ENCODE measurements at regions of chr16 and their contacts with region 1.

Region 1: DNA sequence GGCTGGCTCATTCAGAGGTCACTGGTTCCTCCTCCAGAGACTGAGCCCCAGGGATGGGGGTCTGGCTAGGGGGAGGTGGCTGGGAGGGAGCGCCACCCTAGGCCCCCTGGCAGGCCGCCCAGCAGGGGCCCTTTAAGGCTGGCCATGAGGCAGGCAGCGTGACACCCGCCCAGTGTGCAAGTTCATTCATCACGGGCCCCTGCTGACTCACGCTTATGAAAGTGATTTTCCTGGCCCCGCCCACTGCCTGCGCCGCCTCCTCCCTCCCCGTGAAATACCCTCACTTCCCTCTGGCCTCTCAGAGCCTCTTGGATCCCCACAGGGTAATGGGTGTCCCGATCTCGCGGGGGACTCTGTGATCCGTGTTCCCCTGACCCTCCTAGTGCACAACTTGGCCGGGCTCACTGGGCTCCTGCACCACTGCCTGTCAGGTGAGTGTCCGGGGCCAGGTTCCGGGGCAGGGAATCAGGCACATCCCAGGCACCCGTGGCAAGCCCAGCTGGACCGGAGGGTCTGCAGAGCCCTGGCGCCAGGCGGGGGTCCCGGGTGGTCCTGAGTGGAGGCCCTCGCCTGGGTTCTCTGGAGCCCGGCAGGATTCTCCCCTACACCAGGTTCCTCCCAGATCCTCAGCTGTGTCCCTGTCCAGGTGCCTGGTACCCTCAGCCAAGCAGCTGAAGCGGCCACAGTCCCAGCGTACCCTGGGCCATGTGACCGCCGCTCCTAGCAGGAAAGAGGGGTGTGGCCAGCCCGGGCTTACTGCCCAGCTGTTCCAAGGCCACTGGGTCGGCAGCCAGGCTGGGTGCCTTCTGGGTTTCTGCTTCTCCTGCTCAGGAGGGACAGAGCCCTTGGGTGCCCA is at the start of gene OSGIN1:
- DNase-seq: peak; percentile 91
- H3K4me3 Mint-ChIP-seq: peak within 1 kb of the TSS; percentile 57
- H3K27ac Mint-ChIP-seq: no peak within 1 kb of the TSS
- H3K4me1 Mint-ChIP-seq: peaks cover 9% of the 10 kb centered on the region
- H3K27me3 Mint-ChIP-seq: peaks cover 21% of the 10 kb centered on the region
- total RNA-seq, gene OSGIN1: 0.34 to 0.40 TPM

Region 2: DNA sequence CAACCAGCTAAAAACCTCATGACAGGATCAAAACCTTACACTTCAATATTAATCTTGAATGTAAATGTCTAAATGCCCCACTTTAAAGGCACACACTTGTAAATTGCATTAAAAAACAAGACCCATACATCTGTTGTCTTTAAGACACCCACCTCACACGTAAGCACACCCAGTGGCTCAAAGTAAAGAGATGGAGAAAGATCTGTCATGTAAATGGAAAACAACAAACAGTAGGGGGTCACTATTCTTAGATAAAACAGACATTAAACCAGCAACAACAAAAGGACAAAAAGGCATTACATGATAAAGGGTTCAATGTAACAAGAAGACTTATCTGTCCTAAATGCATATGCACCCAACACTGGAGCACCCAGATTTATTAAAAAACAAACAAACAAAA is 1977.5 kb before region 1 on chr16:
- CTCF ChIA-PET with region 1: no interaction called
- POLR2A ChIA-PET with region 1: no interaction called
- intact Hi-C with region 1: no loop called
- DNase-seq: no peak
- H3K4me3 Mint-ChIP-seq: no peak overlapping the region
- H3K27ac Mint-ChIP-seq: no peak overlapping the region
- H3K4me1 Mint-ChIP-seq: no peaks in the 10 kb centered on the region
- H3K27me3 Mint-ChIP-seq: peaks cover 3% of the 10 kb centered on the region

Region 3: DNA sequence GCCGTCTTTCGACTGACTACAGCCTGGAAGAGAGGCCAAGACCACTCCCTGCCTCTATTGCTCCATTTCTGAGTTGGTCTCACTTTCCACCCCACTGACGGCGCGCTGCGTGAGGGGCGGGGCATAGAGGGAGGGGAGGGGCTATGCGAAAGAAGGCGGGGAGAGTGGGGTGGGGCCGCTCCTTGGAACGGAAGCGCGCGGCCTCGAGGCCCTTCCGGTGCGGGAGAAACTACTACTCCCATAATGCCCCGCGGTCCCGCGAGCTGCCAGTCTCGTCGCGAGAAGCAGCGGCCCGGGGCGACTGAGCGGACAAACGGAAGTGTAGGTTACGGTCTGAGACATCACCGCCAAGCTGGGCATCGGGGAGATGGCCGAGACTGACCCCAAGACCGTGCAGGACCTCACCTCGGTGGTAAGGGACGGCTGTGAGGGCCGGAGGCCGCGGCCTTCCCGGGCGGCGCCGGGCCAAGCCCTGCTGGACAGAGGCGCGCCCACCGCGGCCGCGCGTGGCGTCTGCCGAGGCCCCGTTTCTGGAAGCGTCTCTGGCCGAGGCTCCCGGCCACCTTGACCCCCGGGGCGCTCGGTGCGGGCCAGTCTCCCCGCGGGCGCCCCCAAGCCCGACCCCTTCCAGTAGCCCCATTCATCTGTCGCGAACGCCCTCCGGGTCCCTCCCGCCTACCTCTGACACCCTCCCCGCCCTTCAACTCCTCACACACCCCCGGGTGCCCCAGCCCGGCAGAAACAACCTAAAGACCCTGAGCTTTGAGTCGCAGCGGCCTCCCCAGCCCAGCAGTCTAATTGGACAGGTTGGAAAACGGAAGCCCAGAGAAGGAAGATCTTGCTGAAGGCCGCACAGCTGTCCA is 145.2 kb before region 1 on chr16 and contains the start of gene HSBP1:
- CTCF ChIA-PET with region 1: no interaction called
- POLR2A ChIA-PET with region 1: no interaction called
- intact Hi-C with region 1: loop called (anchors 1 kb)
- DNase-seq: peak; percentile 96
- H3K4me3 Mint-ChIP-seq: peak within 1 kb of the TSS; percentile 98
- H3K27ac Mint-ChIP-seq: peak within 1 kb of the TSS; percentile 88
- H3K4me1 Mint-ChIP-seq: peaks cover 33% of the 10 kb centered on the region
- H3K27me3 Mint-ChIP-seq: no peaks in the 10 kb centered on the region
- total RNA-seq, gene HSBP1: 70.1 to 74.7 TPM

Region 4: GRCh38 chr16:83826146-83826913 is 126.8 kb before region 1 on chr16:
- CTCF ChIA-PET with region 1: interaction called, 6 read pairs
- POLR2A ChIA-PET with region 1: no interaction called
- intact Hi-C with region 1: loop called (anchors 1 kb)
- DNase-seq: peak; percentile 87
- H3K4me3 Mint-ChIP-seq: no peak overlapping the region
- H3K27ac Mint-ChIP-seq: no peak overlapping the region
- H3K4me1 Mint-ChIP-seq: peaks cover 2% of the 10 kb centered on the region
- H3K27me3 Mint-ChIP-seq: peaks cover 6% of the 10 kb centered on the region

Region 5: GRCh38 chr16:83898463-83899271 is 54.5 kb before region 1 on chr16 and contains the start of gene MLYCD:
- CTCF ChIA-PET with region 1: interaction called, 3 read pairs
- POLR2A ChIA-PET with region 1: no interaction called
- intact Hi-C with region 1: loop called (anchors 2 kb)
- DNase-seq: peak; percentile 79
- H3K4me3 Mint-ChIP-seq: peak within 1 kb of the TSS; percentile 94
- H3K27ac Mint-ChIP-seq: peak within 1 kb of the TSS; percentile 70
- H3K4me1 Mint-ChIP-seq: peaks cover 27% of the 10 kb centered on the region
- H3K27me3 Mint-ChIP-seq: no peaks in the 10 kb centered on the region
- total RNA-seq, gene MLYCD: 3.0 to 3.5 TPM

Region 6: DNA sequence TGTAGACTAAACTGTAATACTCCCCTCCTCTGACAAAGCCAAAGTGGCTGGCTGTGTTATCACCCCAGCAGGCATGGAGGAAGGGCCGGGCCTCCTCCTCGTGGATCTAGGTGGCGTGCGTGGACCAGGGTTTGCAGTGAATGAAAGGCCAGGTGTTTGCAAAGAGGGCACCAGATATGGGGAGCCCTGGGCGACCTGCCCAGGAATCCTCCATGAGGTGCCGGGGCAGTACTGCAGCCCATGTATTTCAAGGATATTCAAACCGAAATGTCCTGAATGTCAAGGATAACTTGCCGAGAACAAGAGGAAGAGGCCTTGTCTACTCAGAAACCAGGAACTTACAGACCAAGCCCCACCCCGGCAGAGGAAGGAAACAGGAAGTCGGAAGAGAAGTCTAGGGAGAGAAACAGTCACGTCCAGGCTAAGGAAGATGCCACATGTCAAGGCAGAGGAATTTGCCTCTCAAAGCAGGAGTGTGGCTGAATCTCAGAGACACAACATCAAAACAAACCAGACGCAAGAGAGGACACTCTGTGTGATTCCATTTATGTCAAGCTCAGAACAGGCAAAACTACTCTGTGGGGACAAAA is 13.8 kb before region 1 on chr16:
- CTCF ChIA-PET with region 1: no interaction called
- POLR2A ChIA-PET with region 1: no interaction called
- intact Hi-C with region 1: no loop called
- DNase-seq: no peak
- H3K4me3 Mint-ChIP-seq: no peak overlapping the region
- H3K27ac Mint-ChIP-seq: no peak overlapping the region
- H3K4me1 Mint-ChIP-seq: no peaks in the 10 kb centered on the region
- H3K27me3 Mint-ChIP-seq: no peaks in the 10 kb centered on the region

Region 7: DNA sequence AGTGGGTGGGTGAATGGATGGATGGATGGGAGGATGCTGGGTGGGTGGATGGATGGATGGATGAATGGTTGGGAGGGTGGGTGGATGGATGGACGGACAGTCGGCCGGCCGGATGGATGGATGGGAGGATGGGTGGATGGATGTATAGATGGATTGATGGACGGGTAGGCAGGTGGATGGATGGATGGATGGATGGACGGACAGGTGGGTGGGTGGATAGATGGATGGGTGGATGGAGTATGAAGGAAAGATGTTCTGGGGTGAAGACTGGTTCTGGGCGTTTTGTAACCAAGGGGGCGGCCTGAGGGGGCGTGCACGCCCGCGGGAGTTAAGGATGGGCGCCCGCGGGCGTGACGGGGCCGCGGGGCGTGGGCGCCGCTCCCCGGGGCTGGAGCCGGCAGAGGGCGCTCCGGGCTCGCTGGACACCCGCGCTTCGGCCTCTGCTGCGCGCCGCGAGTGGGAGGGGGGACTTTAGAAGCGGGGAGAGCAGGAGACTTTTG is 14.7 kb after region 1 on chr16 and contains the start of gene NECAB2:
- CTCF ChIA-PET with region 1: no interaction called
- POLR2A ChIA-PET with region 1: no interaction called
- intact Hi-C with region 1: no loop called
- DNase-seq: peak; percentile 33
- H3K4me3 Mint-ChIP-seq: no peak within 1 kb of the TSS
- H3K27ac Mint-ChIP-seq: no peak within 1 kb of the TSS
- H3K4me1 Mint-ChIP-seq: peaks cover 2% of the 10 kb centered on the region
- H3K27me3 Mint-ChIP-seq: peaks cover 11% of the 10 kb centered on the region
- total RNA-seq, gene NECAB2: not detected

Region 8: DNA sequence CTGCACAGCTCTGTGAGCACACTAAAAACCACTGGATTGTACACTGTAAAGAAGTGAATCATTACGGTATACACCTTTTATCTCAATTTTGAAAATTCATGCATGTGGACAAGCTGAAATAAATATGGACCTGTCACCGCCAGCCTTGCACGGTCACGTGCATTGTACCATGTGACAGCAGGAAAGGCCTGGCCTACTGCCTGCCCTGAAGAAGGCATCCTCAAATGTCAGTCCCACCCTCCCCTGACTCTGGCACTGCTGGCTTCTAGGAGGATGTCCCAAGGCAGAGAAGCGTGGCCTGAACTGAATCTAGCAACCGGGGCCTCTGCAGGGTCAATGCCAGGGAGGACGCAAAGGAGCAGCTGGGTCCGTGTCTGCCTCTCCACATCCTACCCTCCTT is 54.8 kb after region 1 on chr16:
- CTCF ChIA-PET with region 1: no interaction called
- POLR2A ChIA-PET with region 1: no interaction called
- intact Hi-C with region 1: no loop called
- DNase-seq: no peak
- H3K4me3 Mint-ChIP-seq: no peak overlapping the region
- H3K27ac Mint-ChIP-seq: no peak overlapping the region
- H3K4me1 Mint-ChIP-seq: no peaks in the 10 kb centered on the region
- H3K27me3 Mint-ChIP-seq: peaks cover 4% of the 10 kb centered on the region